T-cell (primary cell): ENCODE measurements at regions of chr12 and their contacts with region 1.

Region 1: GRCh38 chr12:116142936-116143898 is 134.3 kb downstream of the MED13L start:
- DNase-seq: no peak
- ATAC-seq: peak in 1 of 4 experiments; percentile 38
- H3K4me3 ChIP-seq: no peak overlapping the region
- H3K4me3 Mint-ChIP-seq: peak overlapping the region in 2 of 3 donors; percentile 7 to 15
- H3K27ac ChIP-seq: no peak overlapping the region
- H3K27ac Mint-ChIP-seq: peak overlapping the region; percentile 50 to 55
- H3K4me1 ChIP-seq: peaks cover 11 to 16% of the 10 kb centered on the region in 2 experiments
- H3K4me1 Mint-ChIP-seq: peaks cover 50 to 56% (median 55%) of the 10 kb centered on the region in 3 donors
- H3K27me3 ChIP-seq: no peaks in the 10 kb centered on the region
- H3K27me3 Mint-ChIP-seq: no peaks in the 10 kb centered on the region

Region 2: GRCh38 chr12:116202940-116203339 is 59.7 kb after region 1 on chr12:
- CTCF ChIA-PET with region 1: interaction called, 3 to 11 read pairs
- POLR2A ChIA-PET with region 1: no interaction called
- DNase-seq: no peak
- ATAC-seq: no peak
- H3K4me3 ChIP-seq: no peak overlapping the region
- H3K4me3 Mint-ChIP-seq: no peak overlapping the region
- H3K27ac ChIP-seq: no peak overlapping the region
- H3K27ac Mint-ChIP-seq: no peak overlapping the region
- H3K4me1 ChIP-seq: peaks cover 0 to 25% of the 10 kb centered on the region in 2 experiments
- H3K4me1 Mint-ChIP-seq: peaks cover 69 to 92% (median 81%) of the 10 kb centered on the region in 3 donors
- H3K27me3 ChIP-seq: no peaks in the 10 kb centered on the region
- H3K27me3 Mint-ChIP-seq: no peaks in the 10 kb centered on the region

Region 3: DNA sequence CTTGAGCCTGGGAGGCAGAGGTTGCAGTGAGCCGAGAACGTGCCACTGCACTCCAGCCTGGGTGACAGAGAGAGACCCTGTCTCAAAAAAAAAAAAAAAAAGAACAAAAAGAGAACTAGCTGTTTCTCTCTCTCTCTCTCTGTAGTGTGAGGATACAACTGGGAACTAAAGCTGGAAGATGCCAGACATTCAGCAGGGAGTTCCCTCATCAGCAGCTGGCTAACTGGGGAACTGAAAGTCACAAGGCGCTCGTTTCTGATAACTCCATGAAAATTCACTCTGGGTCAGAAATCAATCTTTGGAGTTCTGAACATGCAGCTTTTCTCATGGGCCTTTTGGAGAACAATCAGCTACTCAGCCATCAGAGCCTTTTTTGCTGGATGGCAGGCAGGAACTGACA is 372.5 kb after region 1 on chr12:
- CTCF ChIA-PET with region 1: no interaction called
- POLR2A ChIA-PET with region 1: no interaction called
- DNase-seq: no peak
- ATAC-seq: no peak
- H3K4me3 ChIP-seq: no peak overlapping the region
- H3K4me3 Mint-ChIP-seq: no peak overlapping the region
- H3K27ac ChIP-seq: no peak overlapping the region
- H3K27ac Mint-ChIP-seq: no peak overlapping the region
- H3K4me1 ChIP-seq: no peaks in the 10 kb centered on the region
- H3K4me1 Mint-ChIP-seq: peaks cover 0 to 3% (median 0%) of the 10 kb centered on the region in 3 donors
- H3K27me3 ChIP-seq: peaks cover 0 to 7% of the 10 kb centered on the region in 2 experiments
- H3K27me3 Mint-ChIP-seq: no peaks in the 10 kb centered on the region